Activated naive CD4-positive, alpha-beta T cell treated with anti-CD3 and anti-CD28 coated beads for 36 hours (primary cell): ENCODE measurements at regions of chr11 and their contacts with region 1.

Region 1: DNA sequence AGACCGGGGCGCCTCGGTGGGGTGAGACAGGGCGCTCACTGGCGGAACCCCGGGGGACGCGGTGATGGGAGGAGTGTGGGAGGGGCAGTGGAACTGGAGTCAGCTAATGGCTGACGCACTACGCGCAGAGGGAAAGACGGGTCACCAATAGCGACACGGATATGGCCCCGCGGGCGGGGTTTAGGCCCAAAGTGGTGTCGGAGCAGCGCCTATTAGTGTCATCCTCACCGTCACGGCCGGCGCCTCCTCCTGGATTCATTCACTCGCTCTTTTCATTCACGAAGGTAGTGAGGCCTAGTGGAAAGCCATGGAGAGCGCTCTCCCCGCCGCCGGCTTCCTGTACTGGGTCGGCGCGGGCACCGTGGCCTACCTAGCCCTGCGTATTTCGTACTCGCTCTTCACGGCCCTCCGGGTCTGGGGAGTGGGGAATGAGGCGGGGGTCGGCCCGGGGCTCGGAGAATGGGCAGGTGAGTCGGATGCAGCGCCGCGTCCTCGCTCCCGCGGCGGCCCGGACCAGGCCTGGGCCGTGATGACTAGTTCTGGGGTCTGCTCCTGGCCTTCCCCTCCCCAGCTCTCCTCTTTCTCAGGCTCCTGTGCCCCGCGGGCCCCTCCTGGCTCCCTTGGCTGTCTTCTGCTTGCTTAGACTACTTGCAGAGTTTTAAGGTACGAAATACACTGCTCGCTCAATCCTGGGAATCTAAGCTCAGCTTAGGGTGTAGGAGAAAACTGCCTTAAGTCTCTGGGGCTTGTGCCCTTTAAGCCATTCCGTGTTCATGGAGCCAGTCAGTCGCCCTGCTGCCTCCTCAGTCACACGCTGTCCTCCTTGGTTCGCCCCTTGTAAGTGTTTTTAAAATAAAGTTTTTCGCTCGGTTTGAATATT is at the start of gene HSD17B12:
- DNase-seq: peak; percentile 99
- H3K4me3 Mint-ChIP-seq: peak within 1 kb of the TSS; percentile 91
- H3K27ac Mint-ChIP-seq: peak within 1 kb of the TSS; percentile 89
- H3K4me1 Mint-ChIP-seq: peaks cover 31% of the 10 kb centered on the region
- H3K27me3 Mint-ChIP-seq: no peaks in the 10 kb centered on the region
- total RNA-seq, gene HSD17B12: 31.7 to 33.8 TPM

Region 2: DNA sequence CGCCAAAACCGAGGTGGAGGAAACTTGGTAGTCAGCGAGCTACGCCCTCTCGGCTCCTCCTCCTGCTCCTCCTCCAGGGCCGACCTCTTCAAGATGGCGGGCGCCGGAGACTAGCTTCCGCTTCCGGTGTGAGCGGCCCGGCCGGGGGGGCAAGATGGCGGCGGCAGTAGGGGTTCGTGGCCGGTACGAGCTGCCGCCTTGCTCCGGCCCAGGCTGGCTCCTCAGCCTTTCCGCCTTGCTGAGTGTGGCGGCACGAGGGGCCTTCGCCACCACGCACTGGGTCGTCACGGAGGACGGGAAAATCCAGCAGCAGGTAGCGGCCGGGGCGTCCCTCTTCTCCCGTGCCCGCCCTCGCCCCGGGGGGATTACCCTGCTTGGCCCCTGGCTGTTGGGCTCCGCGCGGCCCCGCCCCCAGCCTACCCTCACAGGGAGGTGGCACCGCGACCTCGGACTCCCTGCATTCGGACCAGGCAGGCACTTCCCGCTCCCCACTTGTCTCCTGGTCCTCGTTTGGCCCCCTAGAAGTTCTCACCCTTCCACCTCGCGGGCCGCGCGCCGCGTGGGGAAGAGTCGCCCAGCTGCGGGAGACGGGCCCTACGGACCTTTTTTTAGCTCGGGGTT is 321.9 kb before region 1 on chr11 and contains the start of gene TTC17:
- CTCF ChIA-PET with region 1: interaction called, 4 read pairs
- intact Hi-C with region 1: loop called (anchors 2 kb)
- DNase-seq: peak; percentile 96
- H3K4me3 Mint-ChIP-seq: peak within 1 kb of the TSS; percentile 95
- H3K27ac Mint-ChIP-seq: peak within 1 kb of the TSS; percentile 94
- H3K4me1 Mint-ChIP-seq: peaks cover 37% of the 10 kb centered on the region
- H3K27me3 Mint-ChIP-seq: no peaks in the 10 kb centered on the region
- total RNA-seq, gene TTC17: 57.1 to 64.3 TPM

Region 3: GRCh38 chr11:43643898-43644620 is 36.7 kb before region 1 on chr11:
- CTCF ChIA-PET with region 1: no interaction called
- intact Hi-C with region 1: loop called (anchors 1 kb)
- DNase-seq: peak; percentile 93
- H3K4me3 Mint-ChIP-seq: peak overlapping the region; percentile 98
- H3K27ac Mint-ChIP-seq: peak overlapping the region; percentile 92
- H3K4me1 Mint-ChIP-seq: peaks cover 23% of the 10 kb centered on the region
- H3K27me3 Mint-ChIP-seq: peaks cover 12% of the 10 kb centered on the region

Region 4: DNA sequence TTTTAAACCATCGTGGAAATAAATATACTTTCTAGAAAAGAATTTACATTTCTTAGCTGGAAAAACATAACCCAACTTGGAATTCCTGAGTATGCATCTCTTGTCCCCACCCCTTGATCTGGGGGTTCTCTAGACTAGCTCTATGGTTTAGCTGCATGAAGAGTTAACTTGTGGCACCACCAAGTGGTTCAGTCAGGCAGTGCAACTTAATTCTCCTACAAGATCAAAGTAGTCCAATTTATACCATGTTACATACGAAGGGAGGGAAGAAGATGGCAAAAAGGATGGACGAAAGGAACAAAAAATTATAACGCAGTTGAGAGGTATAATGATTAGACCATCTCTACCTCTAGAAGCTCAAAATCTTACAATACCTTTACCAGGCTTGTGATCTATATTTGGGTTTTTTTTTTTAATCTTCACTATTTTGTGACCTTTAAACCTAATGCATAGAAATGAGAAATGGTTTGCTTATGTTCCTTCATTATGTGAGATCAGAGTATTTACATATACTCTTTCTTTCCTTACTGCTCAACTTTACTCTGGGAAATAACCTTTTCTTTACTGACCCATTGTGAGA is 171.4 kb after region 1 on chr11:
- CTCF ChIA-PET with region 1: interaction called, 5 read pairs
- intact Hi-C with region 1: loop called (anchors 1 kb)
- DNase-seq: peak; percentile 87
- H3K4me3 Mint-ChIP-seq: no peak overlapping the region
- H3K27ac Mint-ChIP-seq: no peak overlapping the region
- H3K4me1 Mint-ChIP-seq: peaks cover 4% of the 10 kb centered on the region
- H3K27me3 Mint-ChIP-seq: no peaks in the 10 kb centered on the region

Region 5: GRCh38 chr11:43944761-43945311 is 264.1 kb after region 1 on chr11:
- CTCF ChIA-PET with region 1: no interaction called
- intact Hi-C with region 1: loop called (anchors 2 kb)
- DNase-seq: peak; percentile 83
- H3K4me3 Mint-ChIP-seq: peak overlapping the region; percentile 17
- H3K27ac Mint-ChIP-seq: no peak overlapping the region
- H3K4me1 Mint-ChIP-seq: peaks cover 15% of the 10 kb centered on the region
- H3K27me3 Mint-ChIP-seq: peaks cover 54% of the 10 kb centered on the region

Region 6: GRCh38 chr11:44057340-44057739 is 376.6 kb after region 1 on chr11:
- CTCF ChIA-PET with region 1: no interaction called
- intact Hi-C with region 1: no loop called
- DNase-seq: no peak
- H3K4me3 Mint-ChIP-seq: no peak overlapping the region
- H3K27ac Mint-ChIP-seq: no peak overlapping the region
- H3K4me1 Mint-ChIP-seq: no peaks in the 10 kb centered on the region
- H3K27me3 Mint-ChIP-seq: no peaks in the 10 kb centered on the region